ENCODE measurements at regions of chr14 and their contacts with region 1.

Region 1: DNA sequence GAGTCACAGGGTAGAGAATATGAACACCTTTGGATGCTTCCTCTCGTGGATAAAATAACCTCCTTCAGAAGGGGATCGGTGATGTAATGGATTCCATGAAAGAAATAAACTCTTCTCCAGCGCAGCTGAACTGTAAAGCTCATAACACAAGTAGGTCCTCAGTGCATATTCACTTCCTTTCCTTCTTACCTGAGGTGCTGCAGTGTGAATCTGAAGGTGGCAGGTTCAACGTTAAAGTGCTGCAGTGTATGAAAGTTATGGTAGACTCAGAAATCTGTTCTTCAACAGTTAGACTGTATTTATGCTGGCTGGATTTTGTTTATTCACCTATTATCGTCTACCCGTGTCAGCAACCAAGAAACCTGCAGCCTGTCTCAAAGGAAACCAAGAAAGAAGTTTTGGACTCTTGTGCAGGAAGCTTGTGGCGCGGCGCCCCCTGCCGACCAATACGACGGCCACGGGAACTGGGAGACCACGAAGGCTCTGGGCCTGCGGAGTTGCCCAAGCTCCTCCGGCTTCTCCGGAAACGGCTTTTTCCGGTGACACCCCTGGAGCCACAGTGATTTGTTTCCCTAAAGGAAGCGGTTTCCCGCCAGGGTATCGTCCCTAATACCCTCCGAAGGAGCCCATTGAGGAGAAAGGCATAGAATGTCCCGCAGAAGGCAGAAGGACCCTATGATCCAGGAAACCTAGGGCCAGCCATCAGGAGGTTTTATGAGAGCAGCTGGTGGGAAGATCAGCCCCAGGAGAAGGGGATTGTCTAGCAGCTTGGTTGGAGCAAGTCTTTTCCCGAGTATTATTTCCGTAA is 17.6 kb upstream of the RNASE3 start:
- DNase-seq: peak; percentile 88
- ATAC-seq: peak; percentile 94
- H3K4me3 Mint-ChIP-seq: peak overlapping the region; percentile 3
- H3K27ac Mint-ChIP-seq: no peak overlapping the region
- H3K4me1 Mint-ChIP-seq: peaks cover 22% of the 10 kb centered on the region
- H3K27me3 Mint-ChIP-seq: peaks cover 24% of the 10 kb centered on the region

Region 2: GRCh38 chr14:20697273-20698017 is 176.1 kb before region 1 on chr14:
- CTCF ChIA-PET with region 1: interaction called, 35 read pairs
- POLR2A ChIA-PET with region 1: no interaction called
- DNase-seq: peak; percentile 72
- ATAC-seq: peak; percentile 75
- H3K4me3 Mint-ChIP-seq: no peak overlapping the region
- H3K27ac Mint-ChIP-seq: no peak overlapping the region
- H3K4me1 Mint-ChIP-seq: no peaks in the 10 kb centered on the region
- H3K27me3 Mint-ChIP-seq: peaks cover 8% of the 10 kb centered on the region

Region 3: DNA sequence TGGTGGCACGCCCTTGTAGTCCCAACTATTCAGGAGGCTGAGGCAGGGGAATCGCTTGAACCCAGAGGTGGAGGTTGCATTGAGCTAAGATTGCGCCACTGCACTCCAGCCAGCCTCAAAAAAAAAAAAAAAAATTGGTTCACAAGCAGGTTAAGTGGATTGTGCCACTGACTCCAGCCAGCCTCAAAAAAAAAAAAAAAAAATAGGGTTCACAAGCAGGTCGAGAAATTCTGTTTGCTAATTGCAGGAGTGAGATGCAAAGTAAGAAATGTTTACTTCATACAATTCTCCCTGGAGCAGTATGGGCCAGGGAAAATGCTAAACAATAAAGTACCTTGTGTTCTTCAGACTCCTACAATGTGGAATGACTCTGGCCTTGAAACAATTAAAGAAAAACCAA is 99.2 kb before region 1 on chr14:
- CTCF ChIA-PET with region 1: no interaction called
- POLR2A ChIA-PET with region 1: no interaction called
- DNase-seq: no peak
- ATAC-seq: no peak
- H3K4me3 Mint-ChIP-seq: no peak overlapping the region
- H3K27ac Mint-ChIP-seq: no peak overlapping the region
- H3K4me1 Mint-ChIP-seq: no peaks in the 10 kb centered on the region
- H3K27me3 Mint-ChIP-seq: peaks cover 26% of the 10 kb centered on the region

Region 4: DNA sequence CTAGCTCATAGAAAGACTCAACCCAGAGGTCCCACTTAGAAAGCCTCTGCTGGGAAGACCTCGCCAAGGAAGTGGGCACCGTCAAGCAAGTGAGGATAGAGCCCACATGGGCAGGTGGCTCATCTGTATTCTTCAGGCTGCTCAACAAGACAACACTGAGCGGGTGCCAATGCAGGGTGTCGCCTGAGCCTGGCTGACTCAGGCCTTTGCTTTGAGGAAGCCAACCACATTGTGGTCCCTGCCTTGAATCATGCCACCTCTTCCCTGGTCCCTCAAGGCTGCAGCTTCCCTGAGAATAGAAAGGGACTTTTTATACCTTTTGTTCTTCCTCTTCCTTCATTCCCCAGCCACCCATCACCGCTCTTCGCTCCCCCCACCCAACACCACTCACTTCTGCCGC is 163.2 kb after region 1 on chr14:
- CTCF ChIA-PET with region 1: no interaction called
- POLR2A ChIA-PET with region 1: no interaction called
- DNase-seq: no peak
- ATAC-seq: no peak
- H3K4me3 Mint-ChIP-seq: no peak overlapping the region
- H3K27ac Mint-ChIP-seq: no peak overlapping the region
- H3K4me1 Mint-ChIP-seq: no peaks in the 10 kb centered on the region
- H3K27me3 Mint-ChIP-seq: peaks cover 16% of the 10 kb centered on the region